ENCODE measurements at regions of chr12 and their contacts with region 1.

Region 1: GRCh38 chr12:55188974-55189556 is 31.8 kb upstream of the OR10A7 start:
- DNase-seq: no peak
- H3K4me3 ChIP-seq: no peak overlapping the region
- H3K27ac ChIP-seq: no peak overlapping the region
- H3K4me1 ChIP-seq: no peaks in the 10 kb centered on the region
- H3K27me3 ChIP-seq: no peaks in the 10 kb centered on the region
- CTCF ChIP-seq: peak; percentile 23 to 67 (median 57)

Region 2: DNA sequence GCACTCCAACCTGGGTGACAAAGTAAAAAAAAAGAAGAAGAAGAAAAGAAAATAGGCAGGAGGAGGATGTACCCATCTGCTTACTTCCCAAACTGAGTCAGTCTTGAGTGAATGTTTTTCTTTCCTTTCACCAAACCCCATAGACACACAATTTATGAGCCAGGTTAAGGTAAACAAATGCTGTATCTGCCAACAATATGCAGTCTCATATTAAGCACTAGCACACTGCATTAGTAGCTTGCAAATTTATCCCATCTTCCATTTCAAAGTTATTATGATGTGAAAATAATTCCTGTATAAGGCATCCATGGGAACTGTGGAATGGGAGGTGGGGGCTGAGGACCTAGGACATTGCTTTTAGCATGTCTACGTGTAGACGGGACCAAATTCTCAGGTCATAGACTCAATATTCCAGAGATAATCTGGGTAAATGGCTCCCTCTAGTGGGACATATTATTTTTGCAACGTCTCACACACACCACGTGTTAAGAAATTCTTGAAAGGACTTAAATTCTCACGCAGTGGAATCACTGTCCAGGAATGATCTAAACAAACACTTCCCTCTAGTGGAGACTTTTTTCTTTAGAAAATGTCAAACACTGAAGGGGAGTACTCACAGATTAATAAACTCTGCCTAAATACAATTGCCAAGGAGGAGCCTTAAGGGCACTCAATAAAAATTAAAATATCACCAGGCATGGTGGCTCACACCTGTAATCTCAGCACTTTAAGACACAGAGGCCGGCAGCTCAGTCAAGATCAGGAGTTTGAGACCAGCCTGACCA is 430.5 kb after region 1 on chr12:
- intact Hi-C with region 1: loop called (anchors 1 kb)
- DNase-seq: no peak
- H3K4me3 ChIP-seq: no peak overlapping the region
- H3K27ac ChIP-seq: no peak overlapping the region
- H3K4me1 ChIP-seq: no peaks in the 10 kb centered on the region
- H3K27me3 ChIP-seq: no peaks in the 10 kb centered on the region
- CTCF ChIP-seq: peak; percentile 69 to 80 (median 70)